ENCODE measurements at regions of chr9 and their contacts with region 1.

Region 1: GRCh38 chr9:127744398-127745110 is 9.5 kb upstream of the TOR2A start:
- DNase-seq: no peak
- H3K4me3 ChIP-seq: no peak overlapping the region
- H3K27ac ChIP-seq: no peak overlapping the region
- H3K4me1 ChIP-seq: no peaks in the 10 kb centered on the region
- H3K27me3 ChIP-seq: no peaks in the 10 kb centered on the region

Region 2: GRCh38 chr9:127715394-127716337 is 28.9 kb before region 1 on chr9 and contains the starts of genes PTRH1 and TTC16:
- CTCF ChIA-PET with region 1: no interaction called
- POLR2A ChIA-PET with region 1: no interaction called
- DNase-seq: peak; percentile 95 to 97 (median 97)
- H3K4me3 ChIP-seq: peak within 1 kb of the TSS; percentile 59 to 91 (median 84)
- H3K27ac ChIP-seq: peak within 1 kb of the TSS; percentile 25 to 81
- H3K4me1 ChIP-seq: peaks cover 0 to 31% (median 26%) of the 10 kb centered on the region in 4 experiments
- H3K27me3 ChIP-seq: peaks cover 0 to 4% (median 0%) of the 10 kb centered on the region in 5 experiments

Region 3: GRCh38 chr9:127763918-127764384 is 19.4 kb after region 1 on chr9:
- CTCF ChIA-PET with region 1: interaction called, 10 read pairs
- POLR2A ChIA-PET with region 1: no interaction called
- DNase-seq: peak in 2 of 3 donors; percentile 41 to 53
- H3K4me3 ChIP-seq: no peak overlapping the region
- H3K27ac ChIP-seq: no peak overlapping the region
- H3K4me1 ChIP-seq: peaks cover 2 to 52% (median 51%) of the 10 kb centered on the region in 4 experiments
- H3K27me3 ChIP-seq: no peaks in the 10 kb centered on the region

Region 4: DNA sequence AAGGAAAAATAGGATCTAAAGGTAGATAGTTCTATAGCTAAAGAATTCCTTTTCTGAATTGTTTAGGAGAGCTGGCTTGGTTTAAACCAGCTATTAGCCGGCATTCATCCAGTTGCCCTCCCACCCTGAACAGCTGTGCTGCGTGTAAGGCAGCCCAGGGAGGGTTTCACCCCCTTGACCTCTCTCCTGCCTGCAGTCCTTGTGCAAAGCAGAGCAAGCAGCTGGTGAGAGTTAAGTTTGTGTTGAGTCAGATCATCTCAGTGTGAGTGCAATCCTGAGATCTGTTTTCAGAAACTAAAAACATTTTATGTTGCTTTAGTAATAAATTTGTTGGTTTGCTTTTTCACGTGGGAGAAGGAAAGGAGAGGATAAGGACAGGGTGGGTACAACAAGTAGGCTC is 336.5 kb after region 1 on chr9:
- CTCF ChIA-PET with region 1: no interaction called
- POLR2A ChIA-PET with region 1: no interaction called
- DNase-seq: no peak
- H3K4me3 ChIP-seq: no peak overlapping the region
- H3K27ac ChIP-seq: peak overlapping the region in 1 of 2 experiments; percentile 62
- H3K4me1 ChIP-seq: peaks cover 0 to 35% (median 7%) of the 10 kb centered on the region in 4 experiments
- H3K27me3 ChIP-seq: no peaks in the 10 kb centered on the region